ENCODE measurements at regions of chr11 and their contacts with region 1.

Region 1: DNA sequence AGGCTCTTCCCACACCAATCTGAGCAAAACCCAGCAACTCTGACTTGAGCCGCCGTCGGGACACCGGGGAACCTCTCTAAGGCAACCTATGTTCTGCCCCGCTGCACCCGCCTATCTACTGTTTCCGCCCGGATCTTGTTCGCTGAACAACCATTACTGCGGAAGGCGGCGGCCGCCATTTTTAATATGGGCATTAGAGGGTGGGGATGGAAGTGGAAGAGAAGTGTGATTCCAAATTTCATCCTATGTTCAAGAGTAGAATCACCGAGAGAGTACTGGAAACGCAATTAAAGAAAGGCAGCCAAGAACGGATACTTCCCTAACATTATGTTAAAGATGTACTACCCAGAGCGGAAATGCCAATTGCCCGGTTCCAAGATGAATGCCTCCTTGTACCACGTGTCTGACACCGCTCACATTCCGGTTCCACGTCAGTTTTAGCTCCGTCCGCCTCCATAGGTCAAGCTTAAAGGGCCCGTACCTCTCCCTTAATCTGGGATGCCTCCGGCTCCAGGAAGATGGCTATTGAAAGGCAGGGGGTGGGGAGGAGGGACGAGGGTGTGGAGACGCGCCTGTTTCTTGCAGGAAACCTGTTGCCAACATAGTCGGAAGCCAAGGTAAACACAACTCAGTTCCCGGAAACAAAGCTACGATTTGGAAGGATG is at the start of gene DPAGT1:
- DNase-seq: peak; percentile 82
- H3K4me3 Mint-ChIP-seq: peak within 1 kb of the TSS; percentile 91
- H3K27ac Mint-ChIP-seq: peak within 1 kb of the TSS; percentile 95
- H3K4me1 Mint-ChIP-seq: peaks cover 44% of the 10 kb centered on the region
- H3K27me3 Mint-ChIP-seq: no peaks in the 10 kb centered on the region
- total RNA-seq, gene DPAGT1: 81.8 and 84.4 TPM in 2 replicates

Region 2: GRCh38 chr11:118997627-118998387 is 104.1 kb before region 1 on chr11 and contains the start of gene CENATAC:
- intact Hi-C with region 1: loop called (anchors 2 kb)
- DNase-seq: peak; percentile 96
- H3K4me3 Mint-ChIP-seq: peak within 1 kb of the TSS; percentile 96
- H3K27ac Mint-ChIP-seq: peak within 1 kb of the TSS; percentile 97
- H3K4me1 Mint-ChIP-seq: peaks cover 27% of the 10 kb centered on the region
- H3K27me3 Mint-ChIP-seq: no peaks in the 10 kb centered on the region
- total RNA-seq, gene CENATAC: 50.1 and 53.6 TPM in 2 replicates

Region 3: GRCh38 chr11:119030329-119031049 is 71.4 kb before region 1 on chr11 and contains the start of gene SLC37A4:
- intact Hi-C with region 1: loop called (anchors 2 kb)
- DNase-seq: peak; percentile 99
- H3K4me3 Mint-ChIP-seq: peak within 1 kb of the TSS; percentile 80
- H3K27ac Mint-ChIP-seq: peak within 1 kb of the TSS; percentile 86
- H3K4me1 Mint-ChIP-seq: peaks cover 15% of the 10 kb centered on the region
- H3K27me3 Mint-ChIP-seq: no peaks in the 10 kb centered on the region
- total RNA-seq, gene SLC37A4: 24.3 and 28.7 TPM in 2 replicates

Region 4: DNA sequence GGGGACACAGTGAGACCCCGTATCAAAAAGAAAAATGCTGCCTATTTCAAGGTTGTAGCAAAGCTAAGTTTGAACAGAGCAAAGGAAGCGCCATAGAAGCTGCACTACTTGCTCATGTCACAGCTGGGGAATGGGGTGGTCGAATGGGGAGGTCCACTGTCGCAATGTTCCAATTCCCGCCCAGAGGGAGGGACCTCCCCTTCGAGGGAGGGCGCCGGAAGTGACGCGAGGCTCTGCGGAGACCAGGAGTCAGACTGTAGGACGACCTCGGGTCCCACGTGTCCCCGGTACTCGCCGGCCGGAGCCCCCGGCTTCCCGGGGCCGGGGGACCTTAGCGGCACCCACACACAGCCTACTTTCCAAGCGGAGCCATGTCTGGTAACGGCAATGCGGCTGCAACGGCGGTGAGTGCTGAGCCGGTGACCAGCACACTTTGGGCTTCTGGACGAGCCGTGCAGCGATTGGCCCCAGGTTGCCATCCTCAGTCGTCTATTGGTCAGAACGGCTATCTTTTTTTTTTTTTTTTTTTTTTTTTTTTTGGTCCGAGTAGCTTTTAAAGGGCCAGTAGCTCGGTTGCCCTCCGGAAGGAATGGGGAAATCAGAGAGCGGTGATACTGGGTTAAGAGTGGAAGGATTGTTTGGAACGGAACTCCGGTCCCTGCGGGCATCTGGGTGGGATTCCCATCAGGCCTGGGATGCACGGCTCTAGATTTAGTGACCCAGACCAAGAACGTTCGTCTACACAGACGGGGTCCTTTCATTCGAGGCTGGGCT is 17.0 kb before region 1 on chr11 and contains the start of gene HMBS:
- intact Hi-C with region 1: loop called (anchors 1 kb)
- DNase-seq: peak; percentile 89
- H3K4me3 Mint-ChIP-seq: peak within 1 kb of the TSS; percentile 97
- H3K27ac Mint-ChIP-seq: peak within 1 kb of the TSS; percentile 92
- H3K4me1 Mint-ChIP-seq: peaks cover 39% of the 10 kb centered on the region
- H3K27me3 Mint-ChIP-seq: no peaks in the 10 kb centered on the region
- total RNA-seq, gene HMBS: 55.0 and 55.6 TPM in 2 replicates

Region 5: DNA sequence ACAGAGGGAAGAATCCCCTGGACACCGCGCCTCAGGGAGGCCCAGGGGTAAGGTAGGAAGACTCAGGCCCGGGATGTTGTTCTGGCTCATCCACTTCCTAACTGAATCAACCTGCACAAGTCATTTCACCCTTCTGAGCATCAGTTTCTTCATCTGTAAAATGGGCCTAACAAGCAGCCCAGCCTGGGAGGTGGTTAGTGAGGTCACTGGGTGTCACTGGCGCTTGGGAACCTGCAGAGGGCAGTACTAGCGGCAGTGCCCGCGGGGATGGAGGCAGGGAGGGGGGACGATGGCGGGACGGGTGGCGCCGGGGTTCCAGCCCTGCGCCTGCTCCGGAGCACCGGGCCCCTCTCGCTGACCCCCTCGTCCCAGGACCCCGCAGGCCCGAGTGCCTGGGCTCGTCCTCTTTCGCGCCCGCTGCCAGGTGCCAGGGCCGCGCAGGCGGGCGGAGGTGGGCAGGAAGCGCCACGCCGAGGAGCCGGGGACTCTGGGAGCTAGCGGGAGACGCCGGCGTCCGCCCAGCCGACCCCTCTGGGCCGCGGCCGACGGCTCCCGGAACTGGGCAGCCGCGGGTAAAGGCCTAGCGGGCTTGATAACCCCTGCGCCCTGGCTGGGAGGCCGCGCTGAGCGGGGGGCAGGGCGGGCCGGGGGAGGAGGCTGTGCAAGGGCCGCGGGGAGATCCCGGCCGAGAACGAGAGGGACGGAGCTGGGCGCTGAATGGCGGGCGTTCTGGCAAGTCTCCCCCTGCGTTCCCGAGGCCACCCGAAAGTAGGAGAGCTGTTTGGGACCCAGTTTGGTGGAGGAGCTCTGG is 66.8 kb after region 1 on chr11 and contains the start of gene NLRX1:
- intact Hi-C with region 1: loop called (anchors 1 kb)
- DNase-seq: peak; percentile 77
- H3K4me3 Mint-ChIP-seq: peak within 1 kb of the TSS; percentile 92
- H3K27ac Mint-ChIP-seq: peak within 1 kb of the TSS; percentile 94
- H3K4me1 Mint-ChIP-seq: peaks cover 24% of the 10 kb centered on the region
- H3K27me3 Mint-ChIP-seq: peaks cover 2% of the 10 kb centered on the region
- total RNA-seq, gene NLRX1: 24.1 and 29.5 TPM in 2 replicates